Lower leg skin (tissue), 4 donors: ENCODE measurements at regions of chr10 and their contacts with region 1.

Region 1: GRCh38 chr10:71444284-71445054 is 47.7 kb downstream of the CDH23 start:
- DNase-seq: no peak
- H3K4me3 ChIP-seq: no peak overlapping the region
- CTCF ChIP-seq: no peak
- POLR2A ChIP-seq: no peak

Region 2: GRCh38 chr10:71191531-71192076 is 252.9 kb before region 1 on chr10:
- intact Hi-C with region 1: no loop called
- DNase-seq: peak in 1 of 2 donors; percentile 79
- H3K4me3 ChIP-seq: no peak overlapping the region
- CTCF ChIP-seq: no peak
- POLR2A ChIP-seq: no peak

Region 3: GRCh38 chr10:71426058-71426605 is 18.3 kb before region 1 on chr10:
- intact Hi-C with region 1: loop called (anchors 1 kb)
- DNase-seq: peak in 1 of 2 donors; percentile 39
- H3K4me3 ChIP-seq: no peak overlapping the region
- CTCF ChIP-seq: no peak
- POLR2A ChIP-seq: no peak

Region 4: GRCh38 chr10:72133517-72133916 is 689.0 kb after region 1 on chr10:
- intact Hi-C with region 1: no loop called
- DNase-seq: no peak
- H3K4me3 ChIP-seq: no peak overlapping the region
- CTCF ChIP-seq: no peak
- POLR2A ChIP-seq: no peak